ENCODE measurements at regions of chr15 and their contacts with region 1.

Region 1: GRCh38 chr15:64046347-64047153 is at the start of gene DAPK2:
- DNase-seq: peak; percentile 79 to 94 (median 91)
- ATAC-seq: peak; percentile 83 to 89
- H3K4me3 ChIP-seq: peak within 1 kb of the TSS; percentile 88
- H3K27ac ChIP-seq: peak within 1 kb of the TSS; percentile 57
- H3K4me1 ChIP-seq: peaks cover 11% of the 10 kb centered on the region
- H3K27me3 ChIP-seq: no peaks in the 10 kb centered on the region
- total RNA-seq, gene DAPK2: 83.5 to 95.1 (median 88.1) TPM

Region 2: GRCh38 chr15:63945007-63945788 is 101.4 kb before region 1 on chr15:
- intact Hi-C with region 1: loop called in 2 of 4 experiments (anchors 5 to 10 kb)
- DNase-seq: peak; percentile 69 to 89 (median 88)
- ATAC-seq: peak; percentile 69 to 84
- H3K4me3 ChIP-seq: no peak overlapping the region
- H3K27ac ChIP-seq: peak overlapping the region; percentile 20
- H3K4me1 ChIP-seq: peaks cover 4% of the 10 kb centered on the region
- H3K27me3 ChIP-seq: no peaks in the 10 kb centered on the region

Region 3: GRCh38 chr15:63986751-63987341 is 59.7 kb before region 1 on chr15:
- intact Hi-C with region 1: loop called in 1 of 4 experiments (anchors 10 kb)
- DNase-seq: no peak
- ATAC-seq: no peak
- H3K4me3 ChIP-seq: no peak overlapping the region
- H3K27ac ChIP-seq: peak overlapping the region; percentile 91
- H3K4me1 ChIP-seq: peaks cover 27% of the 10 kb centered on the region
- H3K27me3 ChIP-seq: no peaks in the 10 kb centered on the region

Region 4: GRCh38 chr15:64267331-64267973 is 220.9 kb after region 1 on chr15:
- intact Hi-C with region 1: no loop called
- DNase-seq: no peak
- ATAC-seq: no peak
- H3K4me3 ChIP-seq: no peak overlapping the region
- H3K27ac ChIP-seq: no peak overlapping the region
- H3K4me1 ChIP-seq: no peaks in the 10 kb centered on the region
- H3K27me3 ChIP-seq: no peaks in the 10 kb centered on the region